Calu3 (cell line): ENCODE measurements at regions of chr4 and their contacts with region 1.

Region 1: GRCh38 chr4:6783053-6783981 is 790 bp downstream of the KIAA0232 start:
- DNase-seq: peak; percentile 85
- H3K4me3 Mint-ChIP-seq: peak overlapping the region; percentile 76
- H3K27ac Mint-ChIP-seq: no peak overlapping the region
- H3K4me1 Mint-ChIP-seq: peaks cover 24% of the 10 kb centered on the region
- H3K27me3 Mint-ChIP-seq: no peaks in the 10 kb centered on the region
- CTCF ChIP-seq: no peak

Region 2: DNA sequence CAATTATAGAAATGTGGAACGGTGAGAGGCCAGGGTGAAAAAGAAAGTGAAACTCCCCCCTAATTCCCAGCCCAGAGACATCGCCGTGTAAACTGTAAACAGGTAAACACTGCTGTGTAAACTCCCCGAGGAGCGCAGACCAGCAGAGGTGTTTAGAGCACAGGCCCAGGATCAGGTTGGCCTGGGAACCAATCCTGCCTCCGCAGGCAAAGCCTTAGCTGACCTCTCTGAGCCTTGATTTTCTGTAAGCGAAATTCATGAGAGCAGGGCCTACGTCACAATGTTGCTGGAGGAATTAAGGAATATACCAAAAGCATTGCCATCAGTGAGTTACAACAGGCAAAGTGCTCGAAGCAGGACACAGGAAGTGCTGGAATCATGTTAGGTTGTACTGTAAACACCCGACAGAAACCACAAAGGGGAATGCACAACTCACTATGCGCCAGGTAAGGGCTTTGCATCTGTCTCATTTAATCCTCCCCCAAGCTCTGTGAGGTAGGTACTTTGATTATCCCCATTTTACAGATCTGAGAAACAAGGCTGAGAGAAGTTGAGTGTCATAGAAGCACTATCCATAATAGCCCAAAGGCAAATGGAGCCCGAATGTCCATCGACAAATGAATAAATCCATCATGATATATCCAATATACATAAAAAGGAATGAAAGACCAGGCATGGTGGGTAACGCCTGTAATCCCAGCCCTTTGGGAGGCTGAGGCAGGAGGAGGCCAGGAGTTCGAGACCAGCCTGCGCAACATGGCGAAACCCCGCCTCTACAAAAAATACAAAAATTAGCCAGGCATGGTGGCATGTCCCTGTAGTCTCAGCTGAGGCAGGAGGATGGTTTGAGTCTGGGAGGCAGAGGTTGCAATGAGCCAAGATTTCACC is 31.5 kb before region 1 on chr4:
- CTCF ChIA-PET with region 1: no interaction called
- intact Hi-C with region 1: loop called (anchors 2 kb)
- DNase-seq: no peak
- H3K4me3 Mint-ChIP-seq: no peak overlapping the region
- H3K27ac Mint-ChIP-seq: no peak overlapping the region
- H3K4me1 Mint-ChIP-seq: peaks cover 34% of the 10 kb centered on the region
- H3K27me3 Mint-ChIP-seq: no peaks in the 10 kb centered on the region
- CTCF ChIP-seq: no peak

Region 3: DNA sequence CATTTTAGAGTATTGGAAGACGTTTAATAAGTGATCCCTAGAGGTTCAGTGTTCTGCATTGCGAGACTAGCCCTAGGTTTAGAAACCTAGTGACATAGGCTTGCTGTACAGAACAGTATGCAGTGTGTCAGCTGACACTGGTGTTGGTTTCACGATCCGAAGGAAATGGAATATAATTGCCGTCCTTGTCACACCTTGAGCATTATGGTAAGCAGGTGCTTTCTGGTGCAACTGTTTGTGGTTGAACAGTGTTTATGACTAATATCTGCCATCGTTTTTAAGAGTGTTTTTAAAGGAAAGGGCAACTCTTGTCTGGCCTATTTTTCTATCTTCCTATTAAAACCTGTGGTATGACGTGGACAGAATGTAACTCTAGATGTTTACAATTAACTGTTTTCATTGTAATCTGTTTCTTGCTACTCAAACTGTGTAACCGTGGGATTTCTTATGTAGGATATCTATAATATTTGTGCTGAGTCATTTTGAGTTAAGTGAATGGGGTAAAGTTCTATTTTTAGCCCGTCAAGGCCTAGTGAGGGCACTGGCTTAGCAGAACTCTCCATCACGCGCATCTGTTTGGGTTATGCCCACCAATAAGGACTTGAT is 72.5 kb after region 1 on chr4:
- CTCF ChIA-PET with region 1: no interaction called
- intact Hi-C with region 1: loop called (anchors 10 kb)
- DNase-seq: no peak
- H3K4me3 Mint-ChIP-seq: no peak overlapping the region
- H3K27ac Mint-ChIP-seq: no peak overlapping the region
- H3K4me1 Mint-ChIP-seq: peaks cover 13% of the 10 kb centered on the region
- H3K27me3 Mint-ChIP-seq: no peaks in the 10 kb centered on the region
- CTCF ChIP-seq: no peak